ENCODE measurements at regions of chr2 and their contacts with region 1.

Region 1: GRCh38 chr2:164868563-164869419 is 27.2 kb upstream of the COBLL1 start:
- DNase-seq: no peak
- ATAC-seq: no peak
- H3K4me3 ChIP-seq: no peak overlapping the region
- H3K4me3 Mint-ChIP-seq: no peak overlapping the region
- H3K27ac ChIP-seq: peak overlapping the region in 1 of 2 donors; percentile 11
- H3K27ac Mint-ChIP-seq: peak overlapping the region; percentile 54
- H3K4me1 ChIP-seq: peaks cover 27 to 35% of the 10 kb centered on the region in 2 donors
- H3K4me1 Mint-ChIP-seq: peaks cover 36% of the 10 kb centered on the region
- H3K27me3 ChIP-seq: no peaks in the 10 kb centered on the region
- H3K27me3 Mint-ChIP-seq: no peaks in the 10 kb centered on the region
- CTCF ChIP-seq: no peak

Region 2: DNA sequence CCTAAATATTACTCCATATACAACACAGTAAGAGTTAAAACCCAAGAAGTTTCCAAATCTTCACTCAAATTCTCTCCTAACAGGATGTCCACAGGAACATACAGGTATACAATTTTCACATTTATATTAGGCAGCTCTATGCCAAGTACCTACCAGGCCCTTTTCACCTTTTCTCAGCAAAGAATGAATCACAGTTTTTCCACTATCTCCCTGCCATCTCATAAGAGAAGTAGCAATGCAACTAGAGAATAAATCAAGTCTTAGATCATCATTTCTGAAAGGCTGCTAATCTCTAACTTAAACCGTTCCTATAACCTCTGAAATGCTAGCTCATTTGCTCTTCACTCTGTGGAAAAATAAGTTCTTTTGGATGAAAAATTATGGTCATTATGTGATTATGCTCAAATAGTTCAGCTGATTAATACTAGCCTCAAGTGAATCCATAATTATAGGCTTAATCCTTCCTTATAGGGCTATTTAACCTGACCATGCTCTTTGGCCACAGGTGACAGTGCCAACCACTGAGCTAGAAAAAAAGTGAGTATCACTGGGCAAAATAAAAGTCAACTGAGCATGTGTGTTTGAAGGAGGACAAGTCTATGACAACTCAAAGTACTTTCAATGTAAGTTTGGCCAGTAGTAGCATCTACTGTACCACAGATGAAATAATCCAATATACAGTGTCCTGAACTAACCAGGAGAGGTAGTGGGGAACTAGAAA is 106.9 kb before region 1 on chr2:
- CTCF ChIA-PET with region 1: interaction called, 5 read pairs
- POLR2A ChIA-PET with region 1: interaction called, 6 read pairs
- intact Hi-C with region 1: loop called (anchors 1 kb)
- DNase-seq: peak; percentile 47
- ATAC-seq: peak; percentile 22
- H3K4me3 ChIP-seq: peak overlapping the region in 1 of 5 experiments; percentile 76
- H3K4me3 Mint-ChIP-seq: peak overlapping the region; percentile 94
- H3K27ac ChIP-seq: peak overlapping the region; percentile 79 to 95
- H3K27ac Mint-ChIP-seq: peak overlapping the region; percentile 96
- H3K4me1 ChIP-seq: peaks cover 38 to 48% of the 10 kb centered on the region in 2 donors
- H3K4me1 Mint-ChIP-seq: peaks cover 46% of the 10 kb centered on the region
- H3K27me3 ChIP-seq: no peaks in the 10 kb centered on the region
- H3K27me3 Mint-ChIP-seq: no peaks in the 10 kb centered on the region
- CTCF ChIP-seq: no peak

Region 3: DNA sequence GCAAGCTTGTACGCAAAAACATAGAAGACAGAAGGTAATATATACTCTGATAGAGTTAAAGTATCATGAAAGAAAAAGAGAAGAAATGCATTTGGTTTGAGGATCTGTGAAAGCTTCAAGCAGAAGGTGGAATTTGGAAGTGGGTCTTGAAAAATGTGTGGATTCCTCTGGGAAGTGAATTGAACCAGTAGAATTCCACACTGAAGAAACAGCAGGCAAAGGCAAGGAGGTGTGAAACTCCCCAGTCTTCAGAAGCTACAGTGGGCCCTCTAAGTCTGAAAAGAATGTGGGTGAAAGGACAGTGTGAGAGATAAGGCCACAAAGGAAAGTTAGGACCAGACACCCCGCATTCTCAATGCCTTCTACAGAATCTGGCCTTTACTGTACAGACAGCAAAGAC is 52.7 kb before region 1 on chr2:
- CTCF ChIA-PET with region 1: no interaction called
- POLR2A ChIA-PET with region 1: no interaction called
- intact Hi-C with region 1: no loop called
- DNase-seq: no peak
- ATAC-seq: no peak
- H3K4me3 ChIP-seq: no peak overlapping the region
- H3K4me3 Mint-ChIP-seq: no peak overlapping the region
- H3K27ac ChIP-seq: peak overlapping the region in 1 of 2 donors; percentile 6
- H3K27ac Mint-ChIP-seq: no peak overlapping the region
- H3K4me1 ChIP-seq: peaks cover 11 to 17% of the 10 kb centered on the region in 2 donors
- H3K4me1 Mint-ChIP-seq: peaks cover 22% of the 10 kb centered on the region
- H3K27me3 ChIP-seq: no peaks in the 10 kb centered on the region
- H3K27me3 Mint-ChIP-seq: no peaks in the 10 kb centered on the region
- CTCF ChIP-seq: no peak

Region 4: GRCh38 chr2:164850235-164850634 is 18.6 kb before region 1 on chr2:
- CTCF ChIA-PET with region 1: no interaction called
- POLR2A ChIA-PET with region 1: no interaction called
- intact Hi-C with region 1: loop called (anchors 2 kb)
- DNase-seq: peak; percentile 59
- ATAC-seq: peak; percentile 71
- H3K4me3 ChIP-seq: no peak overlapping the region
- H3K4me3 Mint-ChIP-seq: peak overlapping the region; percentile 56
- H3K27ac ChIP-seq: no peak overlapping the region
- H3K27ac Mint-ChIP-seq: no peak overlapping the region
- H3K4me1 ChIP-seq: peaks cover 0 to 7% of the 10 kb centered on the region in 2 donors
- H3K4me1 Mint-ChIP-seq: peaks cover 12% of the 10 kb centered on the region
- H3K27me3 ChIP-seq: no peaks in the 10 kb centered on the region
- H3K27me3 Mint-ChIP-seq: no peaks in the 10 kb centered on the region
- CTCF ChIP-seq: no peak

Region 5: GRCh38 chr2:164910101-164910899 is 41.5 kb after region 1 on chr2:
- CTCF ChIA-PET with region 1: interaction called, 3 read pairs
- POLR2A ChIA-PET with region 1: no interaction called
- intact Hi-C with region 1: loop called (anchors 2 kb)
- DNase-seq: peak; percentile 50
- ATAC-seq: peak; percentile 79
- H3K4me3 ChIP-seq: peak overlapping the region in 1 of 5 experiments; percentile 13
- H3K4me3 Mint-ChIP-seq: peak overlapping the region; percentile 42
- H3K27ac ChIP-seq: peak overlapping the region; percentile 4 to 55
- H3K27ac Mint-ChIP-seq: peak overlapping the region; percentile 73
- H3K4me1 ChIP-seq: peaks cover 23 to 29% of the 10 kb centered on the region in 2 donors
- H3K4me1 Mint-ChIP-seq: peaks cover 36% of the 10 kb centered on the region
- H3K27me3 ChIP-seq: no peaks in the 10 kb centered on the region
- H3K27me3 Mint-ChIP-seq: no peaks in the 10 kb centered on the region
- CTCF ChIP-seq: no peak

Measured in B cell (primary cell).